ENCODE measurements at regions of chr4 and their contacts with region 1.

Region 1: DNA sequence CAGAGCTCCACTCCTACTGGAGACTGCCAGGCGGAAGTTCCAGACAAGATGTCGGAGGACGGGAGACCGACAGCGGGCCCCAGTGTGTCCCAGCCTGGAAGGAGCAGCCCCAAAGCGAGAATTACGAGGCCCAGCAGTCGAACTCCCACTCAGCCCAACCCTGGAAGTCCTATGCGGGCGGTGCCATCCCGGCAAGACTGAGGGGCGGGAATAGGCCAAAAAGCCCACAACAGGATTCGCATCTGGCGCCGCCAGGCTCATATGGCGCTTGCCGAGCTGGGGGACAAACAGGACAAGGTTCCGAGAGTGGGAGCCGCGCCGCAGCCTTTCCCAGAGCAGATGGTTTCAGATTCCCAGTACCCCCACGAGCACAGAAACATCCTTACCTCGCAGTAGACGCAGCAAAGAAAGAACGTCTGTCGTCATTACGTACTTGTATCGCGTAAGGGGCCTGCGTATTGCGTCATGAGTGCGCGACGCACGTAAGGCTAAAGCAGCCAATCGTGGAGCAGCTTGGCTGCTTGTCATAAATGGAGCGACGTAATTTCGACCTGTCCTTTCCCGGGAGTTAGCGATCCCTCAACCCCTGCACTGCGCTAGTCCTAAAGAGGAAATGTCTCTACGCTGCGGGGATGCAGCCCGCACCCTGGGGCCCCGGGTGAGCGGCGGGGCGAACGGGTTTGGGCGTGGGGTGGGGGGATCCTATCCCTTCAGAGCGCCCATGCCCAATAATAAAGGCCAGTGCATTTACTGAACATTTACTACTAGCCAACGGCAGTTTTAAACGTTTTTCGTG is at the starts of genes LIAS and RPL9:
- DNase-seq: peak; percentile 81 to 97 (median 93)
- H3K4me3 ChIP-seq: peak within 1 kb of the TSS; percentile 85
- H3K4me3 Mint-ChIP-seq: peak within 1 kb of the TSS; percentile 91 to 99 (median 98)
- H3K27ac ChIP-seq: peak within 1 kb of the TSS; percentile 99
- H3K27ac Mint-ChIP-seq: peak within 1 kb of the TSS; percentile 99 to 100 (median 100)
- H3K4me1 ChIP-seq: peaks cover 26% of the 10 kb centered on the region
- H3K4me1 Mint-ChIP-seq: peaks cover 38 to 57% (median 57%) of the 10 kb centered on the region in 3 donors
- H3K27me3 ChIP-seq: no peaks in the 10 kb centered on the region
- H3K27me3 Mint-ChIP-seq: no peaks in the 10 kb centered on the region
- total RNA-seq, gene LIAS: 34.0 to 38.0 TPM
- total RNA-seq, gene RPL9: 1,627 to 1,651 TPM

Region 2: DNA sequence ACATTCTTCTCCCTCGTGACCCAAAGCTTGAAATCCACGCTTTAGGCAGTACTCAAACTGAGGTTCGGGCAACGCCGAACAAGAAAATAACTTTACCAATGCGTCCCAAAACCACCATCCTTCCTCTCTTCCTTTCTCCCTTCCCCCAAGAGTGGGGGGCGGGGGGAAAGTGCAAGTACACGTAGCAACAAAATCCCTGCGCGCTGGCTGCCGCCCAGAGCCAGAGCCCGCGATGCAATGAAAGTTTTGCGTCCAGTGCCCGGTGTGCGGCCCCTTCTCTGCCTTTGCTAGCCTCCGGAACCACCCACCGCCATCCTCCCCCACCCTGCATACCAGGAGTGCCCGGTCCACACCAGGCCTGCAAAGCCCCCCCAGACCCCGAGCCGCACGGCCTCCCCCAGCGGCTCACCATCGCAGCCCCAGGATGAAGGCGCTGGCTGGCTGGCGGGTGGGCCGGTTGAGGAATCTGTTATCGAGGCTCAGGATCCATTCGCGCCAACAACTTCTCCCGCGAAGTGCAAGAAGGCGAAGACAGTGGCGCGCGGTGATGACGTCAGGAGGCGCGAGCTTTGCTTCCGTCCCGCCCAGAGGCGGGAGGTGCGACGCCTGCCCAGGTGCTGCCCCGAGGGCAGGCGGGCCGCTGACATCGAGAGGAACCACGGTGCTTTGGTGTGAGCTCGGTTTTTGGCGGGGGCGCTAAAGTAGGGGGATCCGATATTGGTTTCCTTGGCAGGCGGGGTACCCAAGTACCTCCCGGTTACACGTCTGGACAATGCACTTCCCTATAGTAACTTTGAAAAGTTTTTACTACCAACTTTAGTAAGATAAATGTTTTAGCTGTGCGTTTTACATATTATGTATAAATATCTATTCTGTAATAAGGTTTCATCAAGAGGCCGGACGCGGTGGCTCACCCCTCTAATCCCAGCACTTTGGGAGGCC is 92.6 kb before region 1 on chr4 and contains the start of gene RFC1:
- CTCF ChIA-PET with region 1: interaction called, 4 read pairs
- POLR2A ChIA-PET with region 1: interaction called, 25 read pairs
- DNase-seq: peak; percentile 87 to 95 (median 90)
- H3K4me3 ChIP-seq: peak within 1 kb of the TSS; percentile 93
- H3K4me3 Mint-ChIP-seq: peak within 1 kb of the TSS; percentile 90 to 96 (median 93)
- H3K27ac ChIP-seq: peak within 1 kb of the TSS; percentile 84
- H3K27ac Mint-ChIP-seq: peak within 1 kb of the TSS; percentile 89 to 97 (median 92)
- H3K4me1 ChIP-seq: peaks cover 34% of the 10 kb centered on the region
- H3K4me1 Mint-ChIP-seq: peaks cover 31 to 44% (median 42%) of the 10 kb centered on the region in 3 donors
- H3K27me3 ChIP-seq: no peaks in the 10 kb centered on the region
- H3K27me3 Mint-ChIP-seq: peaks cover 0 to 3% of the 10 kb centered on the region in 2 donors
- total RNA-seq, gene RFC1: 79.8 to 82.9 TPM

Region 3: GRCh38 chr4:39469429-39470077 is 10.8 kb after region 1 on chr4:
- CTCF ChIA-PET with region 1: interaction called, 14 read pairs
- POLR2A ChIA-PET with region 1: interaction called, 9 read pairs
- DNase-seq: peak in 3 of 5 donors; percentile 11 to 46 (median 44)
- H3K4me3 ChIP-seq: no peak overlapping the region
- H3K4me3 Mint-ChIP-seq: no peak overlapping the region
- H3K27ac ChIP-seq: no peak overlapping the region
- H3K27ac Mint-ChIP-seq: peak overlapping the region in 6 of 8 donors; percentile 10 to 42 (median 16)
- H3K4me1 ChIP-seq: peaks cover 4% of the 10 kb centered on the region
- H3K4me1 Mint-ChIP-seq: peaks cover 0 to 4% (median 1%) of the 10 kb centered on the region in 3 donors
- H3K27me3 ChIP-seq: no peaks in the 10 kb centered on the region
- H3K27me3 Mint-ChIP-seq: no peaks in the 10 kb centered on the region

Region 4: DNA sequence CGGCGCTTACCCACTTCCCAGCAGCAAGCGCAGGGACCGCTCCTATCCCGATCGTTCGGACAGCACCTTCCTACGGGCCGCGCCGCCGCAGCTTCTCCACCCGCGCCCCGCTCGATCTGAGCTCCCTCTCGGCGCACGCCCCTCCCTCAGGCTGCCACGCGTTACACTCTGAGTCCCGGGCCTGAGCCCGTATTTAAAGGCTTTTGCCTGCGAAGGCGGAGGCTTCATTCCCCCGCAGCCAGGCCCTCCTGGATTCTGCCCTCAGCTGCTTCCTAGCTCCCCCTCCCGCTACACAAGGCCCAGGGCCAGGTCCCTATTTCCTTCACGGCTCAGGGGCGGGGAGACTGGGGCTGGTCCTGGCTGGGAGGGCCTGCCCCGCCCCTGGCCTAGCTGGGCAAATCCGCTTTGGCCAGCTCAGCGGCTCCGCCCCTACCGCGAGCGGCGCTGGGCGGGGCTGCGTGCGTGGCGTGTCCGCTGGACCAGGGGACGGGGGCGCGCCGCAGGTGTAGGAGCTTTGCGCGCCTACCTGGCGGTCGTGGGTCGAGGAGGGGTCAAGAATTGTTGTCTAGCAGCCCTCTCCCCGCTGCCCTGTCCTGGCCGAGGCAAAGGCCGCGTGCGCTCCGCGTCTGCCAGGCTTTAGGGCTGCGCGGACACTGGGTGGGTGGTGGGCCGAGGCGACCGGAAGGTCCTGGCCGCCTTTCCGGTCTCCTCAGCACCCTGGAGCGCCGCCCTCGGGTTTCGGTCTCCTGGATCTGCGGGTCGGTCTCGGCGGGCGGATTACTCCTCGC is 68.8 kb after region 1 on chr4 and contains the start of gene UGDH:
- CTCF ChIA-PET with region 1: no interaction called
- POLR2A ChIA-PET with region 1: interaction called, 11 read pairs
- DNase-seq: peak; percentile 88 to 92 (median 89)
- H3K4me3 ChIP-seq: peak within 1 kb of the TSS; percentile 76
- H3K4me3 Mint-ChIP-seq: peak within 1 kb of the TSS; percentile 96 to 100 (median 99)
- H3K27ac ChIP-seq: peak within 1 kb of the TSS; percentile 72
- H3K27ac Mint-ChIP-seq: peak within 1 kb of the TSS; percentile 50 to 99 (median 97)
- H3K4me1 ChIP-seq: peaks cover 15% of the 10 kb centered on the region
- H3K4me1 Mint-ChIP-seq: peaks cover 21 to 31% (median 25%) of the 10 kb centered on the region in 3 donors
- H3K27me3 ChIP-seq: no peaks in the 10 kb centered on the region
- H3K27me3 Mint-ChIP-seq: no peaks in the 10 kb centered on the region
- total RNA-seq, gene UGDH: 26.9 to 34.9 TPM

Region 5: GRCh38 chr4:39638354-39639240 is 179.9 kb after region 1 on chr4 and contains the start of gene SMIM14:
- CTCF ChIA-PET with region 1: no interaction called
- POLR2A ChIA-PET with region 1: interaction called, 13 read pairs
- DNase-seq: peak; percentile 83 to 91 (median 89)
- H3K4me3 ChIP-seq: peak within 1 kb of the TSS; percentile 86
- H3K4me3 Mint-ChIP-seq: peak within 1 kb of the TSS; percentile 84 to 97 (median 93)
- H3K27ac ChIP-seq: peak within 1 kb of the TSS; percentile 74
- H3K27ac Mint-ChIP-seq: peak within 1 kb of the TSS; percentile 88 to 98 (median 96)
- H3K4me1 ChIP-seq: peaks cover 18% of the 10 kb centered on the region
- H3K4me1 Mint-ChIP-seq: peaks cover 42 to 49% (median 49%) of the 10 kb centered on the region in 3 donors
- H3K27me3 ChIP-seq: no peaks in the 10 kb centered on the region
- H3K27me3 Mint-ChIP-seq: no peaks in the 10 kb centered on the region
- total RNA-seq, gene SMIM14: 2.2 TPM

Measured in CD8-positive, alpha-beta memory T cell (primary cell).